ENCODE measurements at regions of chr19 and their contacts with region 1.

Region 1: GRCh38 chr19:1260636-1261537 is 8.2 kb upstream of the CIRBP start:
- DNase-seq: peak; percentile 90 to 99 (median 96)
- ATAC-seq: peak; percentile 82 to 89 (median 87)
- H3K4me3 ChIP-seq: peak overlapping the region; percentile 74 to 91
- H3K4me3 Mint-ChIP-seq: peak overlapping the region; percentile 79 to 87 (median 83)
- H3K27ac ChIP-seq: peak overlapping the region; percentile 99
- H3K27ac Mint-ChIP-seq: peak overlapping the region; percentile 93 to 94
- H3K4me1 ChIP-seq: peaks cover 34 to 74% of the 10 kb centered on the region in 2 experiments
- H3K4me1 Mint-ChIP-seq: peaks cover 52 to 68% (median 52%) of the 10 kb centered on the region in 3 donors
- H3K27me3 ChIP-seq: no peaks in the 10 kb centered on the region
- H3K27me3 Mint-ChIP-seq: no peaks in the 10 kb centered on the region

Region 2: GRCh38 chr19:1161716-1162115 is 99.2 kb before region 1 on chr19:
- CTCF ChIA-PET with region 1: no interaction called
- POLR2A ChIA-PET with region 1: no interaction called
- DNase-seq: no peak
- ATAC-seq: no peak
- H3K4me3 ChIP-seq: no peak overlapping the region
- H3K4me3 Mint-ChIP-seq: no peak overlapping the region
- H3K27ac ChIP-seq: no peak overlapping the region
- H3K27ac Mint-ChIP-seq: no peak overlapping the region
- H3K4me1 ChIP-seq: peaks cover 0 to 12% of the 10 kb centered on the region in 2 experiments
- H3K4me1 Mint-ChIP-seq: peaks cover 6 to 8% (median 6%) of the 10 kb centered on the region in 3 donors
- H3K27me3 ChIP-seq: no peaks in the 10 kb centered on the region
- H3K27me3 Mint-ChIP-seq: no peaks in the 10 kb centered on the region

Region 3: DNA sequence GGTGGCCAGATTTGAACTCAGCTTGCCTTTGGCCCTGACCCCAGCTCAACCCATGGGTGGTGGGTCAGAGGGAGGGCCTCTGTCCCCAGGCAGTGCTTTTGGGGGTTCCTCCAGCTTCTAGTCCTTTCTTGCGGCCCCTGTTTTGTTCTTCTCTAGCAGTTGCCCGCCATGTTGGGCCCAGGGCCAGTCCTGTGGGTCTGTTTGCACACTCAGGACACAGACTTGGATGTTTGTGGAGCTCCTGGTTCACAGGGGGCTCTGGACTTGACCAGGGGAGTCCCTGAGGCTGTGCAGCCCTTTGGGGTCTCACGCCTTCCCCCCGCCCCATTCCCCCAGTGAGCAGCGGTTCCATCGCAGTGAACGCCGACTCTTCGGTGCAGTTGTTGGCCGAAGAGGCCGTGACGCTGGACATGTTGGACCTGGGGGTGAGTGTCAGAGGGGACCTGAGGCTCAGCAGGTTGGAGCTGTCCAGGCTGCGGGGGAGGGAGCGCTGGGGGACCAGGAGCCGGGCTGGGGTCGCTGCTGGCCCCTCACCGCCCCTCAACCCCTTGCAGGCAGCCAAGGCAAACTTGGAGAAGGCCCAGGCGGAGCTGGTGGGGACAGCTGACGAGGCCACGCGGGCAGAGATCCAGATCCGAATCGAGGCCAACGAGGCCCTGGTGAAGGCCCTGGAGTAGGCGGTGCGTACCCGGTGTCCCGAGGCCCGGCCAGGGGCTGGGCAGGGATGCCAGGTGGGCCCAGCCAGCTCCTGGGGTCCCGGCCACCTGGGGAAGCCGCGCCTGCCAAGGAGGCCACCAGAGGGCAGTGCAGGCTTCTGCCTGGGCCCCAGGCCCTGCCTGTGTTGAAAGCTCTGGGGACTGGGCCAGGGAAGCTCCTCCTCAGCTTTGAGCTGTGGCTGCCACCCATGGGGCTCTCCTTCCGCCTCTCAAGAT is 16.9 kb before region 1 on chr19:
- CTCF ChIA-PET with region 1: interaction called, 28 to 115 read pairs
- POLR2A ChIA-PET with region 1: interaction called in 1 of 2 experiments, 6 read pairs
- DNase-seq: peak; percentile 72 to 92 (median 84)
- ATAC-seq: peak; percentile 38 to 41 (median 39)
- H3K4me3 ChIP-seq: no peak overlapping the region
- H3K4me3 Mint-ChIP-seq: peak overlapping the region; percentile 43 to 93 (median 59)
- H3K27ac ChIP-seq: peak overlapping the region; percentile 58
- H3K27ac Mint-ChIP-seq: peak overlapping the region; percentile 80 to 92
- H3K4me1 ChIP-seq: peaks cover 18 to 77% of the 10 kb centered on the region in 2 experiments
- H3K4me1 Mint-ChIP-seq: peaks cover 16 to 38% (median 38%) of the 10 kb centered on the region in 3 donors
- H3K27me3 ChIP-seq: peaks cover 0 to 11% of the 10 kb centered on the region in 2 experiments
- H3K27me3 Mint-ChIP-seq: no peaks in the 10 kb centered on the region

Region 4: DNA sequence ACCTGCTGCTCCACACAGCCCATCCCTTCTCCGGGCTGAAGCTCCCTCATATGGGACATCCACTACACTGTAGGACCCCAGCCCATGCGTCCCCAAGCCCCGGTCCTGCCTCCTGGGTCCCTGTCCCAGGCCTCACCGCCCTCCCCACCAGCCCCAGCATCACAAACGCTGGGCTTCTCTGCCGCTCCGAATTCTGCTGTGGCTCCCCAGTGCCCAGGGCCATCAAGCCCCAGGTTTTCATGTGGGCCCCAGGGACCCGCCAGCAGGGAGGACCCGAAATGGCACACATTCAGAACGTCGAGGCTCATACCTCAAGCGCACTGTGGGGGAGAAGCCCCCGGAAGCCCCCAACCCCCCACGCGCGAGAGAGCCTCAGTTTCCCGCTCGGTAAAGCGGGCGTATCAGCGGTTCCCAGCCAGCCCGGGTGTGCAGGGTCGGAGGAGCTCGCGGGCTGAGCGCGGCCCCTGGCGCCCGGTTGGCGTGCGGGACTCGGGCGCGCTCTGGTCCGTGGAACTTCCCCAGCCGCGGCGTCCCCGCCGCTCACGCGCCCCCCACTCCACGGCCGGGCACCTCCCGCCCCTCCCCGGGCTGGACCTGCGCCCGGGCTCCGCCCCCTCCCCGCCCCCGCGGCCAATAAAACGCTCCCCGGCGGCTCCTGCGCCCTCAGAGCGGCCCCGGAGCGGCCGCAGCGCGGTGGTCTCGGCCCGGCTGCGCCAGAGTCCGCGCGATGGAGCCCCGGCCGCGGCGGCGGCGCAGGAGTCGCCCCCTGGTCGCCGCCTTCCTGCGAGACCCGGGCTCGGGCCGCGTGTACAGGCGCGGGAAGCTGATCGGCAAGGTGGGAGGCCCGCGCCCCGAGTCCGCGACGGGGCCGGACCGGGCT is 262.8 kb after region 1 on chr19 and contains the start of gene PLK5:
- CTCF ChIA-PET with region 1: no interaction called
- POLR2A ChIA-PET with region 1: no interaction called
- DNase-seq: no peak
- ATAC-seq: peak in 3 of 4 experiments; percentile 30 to 43 (median 39)
- H3K4me3 ChIP-seq: no peak within 1 kb of the TSS
- H3K4me3 Mint-ChIP-seq: peak within 1 kb of the TSS in 1 of 3 donors; percentile 59
- H3K27ac ChIP-seq: no peak within 1 kb of the TSS
- H3K27ac Mint-ChIP-seq: no peak within 1 kb of the TSS
- H3K4me1 ChIP-seq: no peaks in the 10 kb centered on the region
- H3K4me1 Mint-ChIP-seq: peaks cover 4 to 8% (median 7%) of the 10 kb centered on the region in 3 donors
- H3K27me3 ChIP-seq: peaks cover 5 to 76% of the 10 kb centered on the region in 2 experiments
- H3K27me3 Mint-ChIP-seq: peaks cover 34 to 45% of the 10 kb centered on the region in 2 donors
- total RNA-seq, gene PLK5: not detected

Region 5: GRCh38 chr19:2848616-2849015 is 1587.7 kb after region 1 on chr19:
- CTCF ChIA-PET with region 1: no interaction called
- POLR2A ChIA-PET with region 1: no interaction called
- DNase-seq: no peak
- ATAC-seq: no peak
- H3K4me3 ChIP-seq: no peak overlapping the region
- H3K4me3 Mint-ChIP-seq: no peak overlapping the region
- H3K27ac ChIP-seq: no peak overlapping the region
- H3K27ac Mint-ChIP-seq: no peak overlapping the region
- H3K4me1 ChIP-seq: peaks cover 0 to 8% of the 10 kb centered on the region in 2 experiments
- H3K4me1 Mint-ChIP-seq: peaks cover 17 to 21% (median 17%) of the 10 kb centered on the region in 3 donors
- H3K27me3 ChIP-seq: no peaks in the 10 kb centered on the region
- H3K27me3 Mint-ChIP-seq: no peaks in the 10 kb centered on the region

Measured in T-cell (primary cell).